ENCODE measurements at regions of chr5 and their contacts with region 1.

Region 1: GRCh38 chr5:131810510-131811249 is 13.9 kb upstream of the FNIP1 start:
- DNase-seq: peak; percentile 31
- H3K4me3 Mint-ChIP-seq: no peak overlapping the region
- H3K27ac Mint-ChIP-seq: no peak overlapping the region
- H3K4me1 Mint-ChIP-seq: no peaks in the 10 kb centered on the region
- H3K27me3 Mint-ChIP-seq: no peaks in the 10 kb centered on the region

Region 2: GRCh38 chr5:131528682-131529081 is 282.0 kb before region 1 on chr5:
- CTCF ChIA-PET with region 1: no interaction called
- intact Hi-C with region 1: no loop called
- DNase-seq: no peak
- H3K4me3 Mint-ChIP-seq: no peak overlapping the region
- H3K27ac Mint-ChIP-seq: peak overlapping the region; percentile 18
- H3K4me1 Mint-ChIP-seq: peaks cover 73% of the 10 kb centered on the region
- H3K27me3 Mint-ChIP-seq: no peaks in the 10 kb centered on the region

Region 3: GRCh38 chr5:132001647-132002561 is 191.2 kb after region 1 on chr5:
- CTCF ChIA-PET with region 1: interaction called, 53 read pairs
- intact Hi-C with region 1: no loop called
- DNase-seq: no peak
- H3K4me3 Mint-ChIP-seq: no peak overlapping the region
- H3K27ac Mint-ChIP-seq: no peak overlapping the region
- H3K4me1 Mint-ChIP-seq: peaks cover 42% of the 10 kb centered on the region
- H3K27me3 Mint-ChIP-seq: no peaks in the 10 kb centered on the region

Measured in activated naive CD4-positive, alpha-beta T cell treated with anti-CD3 and anti-CD28 coated beads for 36 hours (primary cell).